ENCODE measurements at regions of chr3 and their contacts with region 1.

Region 1: DNA sequence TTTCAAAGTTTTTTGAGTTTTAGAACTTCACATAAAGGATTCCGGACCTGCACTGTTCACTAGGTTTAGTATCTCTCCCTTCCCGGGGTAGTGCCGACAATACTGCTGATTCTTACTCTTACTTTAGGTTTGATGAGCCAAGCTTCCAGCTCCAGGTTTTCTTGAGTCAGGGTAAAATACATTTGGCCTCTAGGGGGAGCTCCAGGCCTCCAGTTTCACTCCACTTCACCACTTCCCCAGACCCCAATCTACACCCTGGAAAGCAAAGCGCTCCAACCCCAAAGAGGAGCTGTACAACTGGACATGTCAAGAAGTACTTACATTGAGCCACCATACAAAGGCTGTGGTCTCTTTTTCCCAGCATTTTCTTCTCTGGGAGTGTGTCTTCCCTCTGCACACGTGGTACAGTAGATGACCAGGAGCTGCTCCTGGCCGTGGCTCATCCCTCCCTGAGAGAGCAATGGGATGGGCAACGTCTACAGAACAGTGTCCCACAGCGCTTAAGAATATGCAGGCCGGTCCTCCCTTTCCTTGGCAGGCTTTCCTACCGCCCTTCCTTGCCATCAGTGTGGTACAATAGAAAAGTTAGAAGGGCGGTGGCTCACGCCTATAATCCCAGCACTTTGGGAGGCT is 93.9 kb upstream of the CCDC80 start:
- DNase-seq: peak; percentile 46
- ATAC-seq: peak; percentile 81
- H3K4me3 Mint-ChIP-seq: no peak overlapping the region
- H3K27ac Mint-ChIP-seq: no peak overlapping the region
- H3K4me1 Mint-ChIP-seq: peaks cover 28% of the 10 kb centered on the region
- H3K27me3 Mint-ChIP-seq: no peaks in the 10 kb centered on the region
- CTCF ChIP-seq: no peak

Region 2: DNA sequence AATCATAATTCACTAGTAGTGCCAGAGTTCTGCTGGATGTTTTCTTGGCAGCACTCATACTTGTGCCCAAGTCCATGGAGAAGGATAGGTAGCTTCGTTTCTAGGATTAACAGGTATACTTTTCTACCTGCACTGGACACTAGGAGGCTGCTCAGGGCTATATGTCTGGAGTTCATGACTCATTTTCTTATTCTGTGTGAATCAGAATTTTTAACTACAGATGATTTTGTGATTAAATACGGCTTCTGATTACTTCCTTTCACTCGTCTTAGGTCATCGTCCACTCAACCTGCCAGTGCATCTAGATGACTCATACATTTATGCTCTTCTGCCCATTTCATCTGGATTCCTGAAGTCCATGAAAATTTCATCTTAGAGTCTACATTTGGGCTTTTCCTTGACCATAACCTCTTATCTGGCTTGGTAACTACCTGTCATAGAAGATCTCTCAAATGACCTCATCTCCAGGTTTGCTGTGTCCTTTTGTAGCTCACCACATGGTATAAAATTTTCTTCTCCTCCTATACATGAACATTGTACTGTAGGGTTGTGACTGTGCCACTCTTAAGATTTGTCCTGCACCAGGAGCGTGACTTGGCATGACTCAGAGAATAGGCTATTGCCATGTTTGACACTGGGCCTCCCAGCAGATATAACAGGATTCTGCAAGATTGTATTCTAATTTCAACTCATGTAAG is 535.1 kb before region 1 on chr3:
- CTCF ChIA-PET with region 1: no interaction called
- POLR2A ChIA-PET with region 1: no interaction called
- intact Hi-C with region 1: no loop called
- DNase-seq: no peak
- ATAC-seq: no peak
- H3K4me3 Mint-ChIP-seq: no peak overlapping the region
- H3K27ac Mint-ChIP-seq: no peak overlapping the region
- H3K4me1 Mint-ChIP-seq: no peaks in the 10 kb centered on the region
- H3K27me3 Mint-ChIP-seq: no peaks in the 10 kb centered on the region
- CTCF ChIP-seq: no peak

Region 3: GRCh38 chr3:112642912-112643506 is 91.8 kb before region 1 on chr3:
- CTCF ChIA-PET with region 1: interaction called, 53 read pairs
- POLR2A ChIA-PET with region 1: no interaction called
- intact Hi-C with region 1: loop called (anchors 1 kb)
- DNase-seq: peak; percentile 51
- ATAC-seq: peak; percentile 100
- H3K4me3 Mint-ChIP-seq: peak overlapping the region; percentile 69
- H3K27ac Mint-ChIP-seq: no peak overlapping the region
- H3K4me1 Mint-ChIP-seq: peaks cover 11% of the 10 kb centered on the region
- H3K27me3 Mint-ChIP-seq: peaks cover 4% of the 10 kb centered on the region
- CTCF ChIP-seq: peak; percentile 36

Region 4: DNA sequence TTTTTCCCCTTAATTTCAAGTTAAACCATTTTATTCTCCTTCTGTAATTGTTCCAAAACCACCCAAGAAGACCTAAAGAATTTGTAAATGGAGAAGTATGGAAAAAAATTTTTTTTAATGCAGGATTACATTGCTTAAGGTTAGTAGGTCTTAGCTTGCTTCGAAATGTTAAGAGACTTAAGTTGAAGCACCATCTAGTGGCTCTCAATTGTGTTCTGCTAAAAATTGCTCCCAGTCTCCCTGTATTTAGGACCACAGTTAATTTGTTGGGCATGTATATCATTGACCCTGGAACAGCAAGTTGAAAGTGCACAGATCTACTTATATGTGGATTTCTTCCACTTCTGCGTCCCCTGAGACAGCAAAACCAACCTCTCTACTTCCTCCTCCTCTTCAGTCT is 79.4 kb after region 1 on chr3:
- CTCF ChIA-PET with region 1: interaction called, 14 read pairs
- POLR2A ChIA-PET with region 1: interaction called, 4 read pairs
- intact Hi-C with region 1: loop called (anchors 1 kb)
- DNase-seq: no peak
- ATAC-seq: peak; percentile 26
- H3K4me3 Mint-ChIP-seq: peak overlapping the region; percentile 58
- H3K27ac Mint-ChIP-seq: peak overlapping the region; percentile 79
- H3K4me1 Mint-ChIP-seq: peaks cover 48% of the 10 kb centered on the region
- H3K27me3 Mint-ChIP-seq: no peaks in the 10 kb centered on the region
- CTCF ChIP-seq: no peak

Region 5: GRCh38 chr3:112979240-112979832 is 244.5 kb after region 1 on chr3:
- CTCF ChIA-PET with region 1: interaction called, 159 read pairs
- POLR2A ChIA-PET with region 1: interaction called, 10 read pairs
- intact Hi-C with region 1: loop called (anchors 1 kb)
- DNase-seq: no peak
- ATAC-seq: no peak
- H3K4me3 Mint-ChIP-seq: no peak overlapping the region
- H3K27ac Mint-ChIP-seq: no peak overlapping the region
- H3K4me1 Mint-ChIP-seq: peaks cover 81% of the 10 kb centered on the region
- H3K27me3 Mint-ChIP-seq: no peaks in the 10 kb centered on the region
- CTCF ChIP-seq: peak; percentile 31

Region 6: DNA sequence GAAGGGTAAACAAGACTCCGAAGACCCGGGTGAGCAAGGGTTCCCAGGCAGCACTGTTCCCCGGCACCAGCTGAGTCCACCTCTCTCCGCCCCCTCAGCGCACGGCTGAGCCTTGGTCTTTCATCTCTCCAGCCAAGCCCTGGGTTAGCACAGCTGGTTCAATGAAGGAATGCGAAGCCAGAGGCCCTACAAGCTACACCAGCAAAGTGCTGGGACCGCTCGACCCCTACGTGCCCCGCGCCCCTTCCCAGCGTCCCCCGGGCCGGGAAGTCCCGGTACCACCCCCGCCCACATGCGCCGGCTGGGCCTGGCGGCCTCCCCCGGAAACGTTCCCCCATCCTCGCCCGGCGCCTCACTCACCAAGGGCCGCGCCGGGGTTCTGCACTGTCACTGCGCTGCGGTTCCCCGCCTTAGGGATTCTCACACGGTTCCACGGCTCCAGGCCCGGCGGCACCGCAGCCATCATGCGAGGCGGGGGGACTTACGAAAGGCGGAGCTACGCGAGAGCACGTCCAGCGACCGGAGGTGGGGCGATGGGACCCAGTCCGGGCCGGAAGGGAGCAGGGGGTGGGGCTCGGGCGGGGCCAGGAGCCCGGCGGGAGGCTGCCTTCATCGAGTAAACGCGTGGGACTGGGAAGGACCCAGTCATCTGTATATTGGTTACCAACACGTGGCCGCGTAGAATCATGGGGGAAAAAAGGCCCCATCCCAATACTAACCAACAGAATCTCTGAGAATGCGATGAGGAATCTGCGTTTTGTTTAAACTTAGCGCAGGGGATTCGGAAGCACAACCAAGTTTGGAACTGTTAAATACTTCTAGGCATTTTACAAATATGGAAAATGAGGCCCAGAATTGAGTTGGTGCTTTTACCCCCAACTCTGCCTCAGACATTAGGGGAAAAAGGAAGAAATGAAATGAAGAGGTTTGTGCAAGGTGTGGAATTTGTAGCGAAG is 284.6 kb after region 1 on chr3:
- CTCF ChIA-PET with region 1: interaction called, 9 read pairs
- POLR2A ChIA-PET with region 1: interaction called, 6 read pairs
- intact Hi-C with region 1: loop called (anchors 1 kb)
- DNase-seq: peak; percentile 81
- ATAC-seq: peak; percentile 87
- H3K4me3 Mint-ChIP-seq: peak overlapping the region; percentile 92
- H3K27ac Mint-ChIP-seq: peak overlapping the region; percentile 95
- H3K4me1 Mint-ChIP-seq: peaks cover 54% of the 10 kb centered on the region
- H3K27me3 Mint-ChIP-seq: no peaks in the 10 kb centered on the region
- CTCF ChIP-seq: no peak

Measured in activated B cell treated with CpG ODN at 0.5 μM for 24 hours (primary cell).